GM23248 (cell line): ENCODE measurements at regions of chr14 and their contacts with region 1.

Region 1: GRCh38 chr14:104908303-104908702 is 16.4 kb upstream of the PLD4 start:
- DNase-seq: no peak
- H3K4me3 ChIP-seq: no peak overlapping the region
- H3K27ac ChIP-seq: no peak overlapping the region
- H3K4me1 ChIP-seq: no peaks in the 10 kb centered on the region
- H3K27me3 ChIP-seq: peaks cover 7% of the 10 kb centered on the region; the same call in 1 of the 2 replicates

Region 2: DNA sequence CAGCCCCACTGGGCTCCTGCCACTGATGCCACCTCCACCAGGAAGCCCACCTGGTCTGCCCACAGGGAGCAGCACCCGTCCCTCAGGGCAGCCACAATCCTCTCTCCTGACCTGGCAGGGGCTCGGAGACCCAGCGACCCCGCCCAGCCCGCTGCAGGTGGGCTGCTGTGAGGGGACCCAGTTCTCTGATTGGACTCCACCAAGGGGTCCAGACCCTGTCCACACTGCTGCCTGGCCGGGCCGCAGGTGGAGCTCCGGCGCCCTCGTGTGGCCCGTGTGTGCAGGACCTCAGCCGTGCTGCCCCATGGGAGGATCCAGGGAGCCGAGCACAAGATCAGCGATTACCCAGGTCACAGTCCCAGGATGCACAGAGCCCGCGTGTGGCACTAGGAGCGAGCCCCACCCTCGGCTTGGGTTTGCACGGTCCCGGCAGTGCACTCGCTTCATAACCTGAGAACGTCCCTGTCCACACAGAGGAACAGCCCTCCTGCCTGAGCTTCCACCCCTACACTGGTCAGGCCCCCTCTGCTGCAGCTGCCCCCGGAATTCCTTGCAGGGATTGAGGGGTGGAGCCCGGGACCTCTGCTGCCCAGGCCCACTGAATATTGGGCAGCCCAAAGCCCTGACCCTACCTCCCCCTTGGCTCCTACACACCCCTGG is 268.3 kb before region 1 on chr14:
- in situ Hi-C with region 1: no loop called
- DNase-seq: peak; percentile 77
- H3K4me3 ChIP-seq: no peak overlapping the region
- H3K27ac ChIP-seq: no peak overlapping the region
- H3K4me1 ChIP-seq: no peaks in the 10 kb centered on the region
- H3K27me3 ChIP-seq: peaks cover 34% of the 10 kb centered on the region

Region 3: GRCh38 chr14:105045710-105046326 is 137.5 kb after region 1 on chr14:
- in situ Hi-C with region 1: loop called (anchors 10 kb)
- DNase-seq: peak; percentile 91
- H3K4me3 ChIP-seq: peak overlapping the region; percentile 38; the same call in 1 of the 2 replicates
- H3K27ac ChIP-seq: no peak overlapping the region
- H3K4me1 ChIP-seq: no peaks in the 10 kb centered on the region
- H3K27me3 ChIP-seq: no peaks in the 10 kb centered on the region